MCF 10A (cell line): ENCODE measurements at regions of chr5 and their contacts with region 1.

Region 1: DNA sequence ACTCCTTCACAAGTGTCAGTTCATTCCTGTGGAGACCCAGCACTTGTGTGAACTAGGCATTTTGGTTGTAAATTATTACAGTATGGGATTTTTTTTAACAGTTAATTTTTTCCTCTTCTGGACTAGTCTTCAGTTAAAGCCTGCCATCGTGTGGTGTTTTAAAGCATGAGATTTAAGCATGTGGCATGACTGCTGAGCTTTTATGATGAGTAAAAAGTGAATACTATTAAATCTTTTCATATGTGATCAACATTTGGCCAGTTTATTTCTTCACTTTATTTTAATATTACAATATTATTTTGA is 25.0 kb downstream of the LMNB1 start:
- DNase-seq: peak; percentile 67
- H3K4me3 Mint-ChIP-seq: peak overlapping the region; percentile 15
- H3K27ac Mint-ChIP-seq: peak overlapping the region; percentile 37
- H3K4me1 Mint-ChIP-seq: peaks cover 35% of the 10 kb centered on the region
- H3K27me3 Mint-ChIP-seq: no peaks in the 10 kb centered on the region
- CTCF ChIP-seq: peak; percentile 70

Region 2: DNA sequence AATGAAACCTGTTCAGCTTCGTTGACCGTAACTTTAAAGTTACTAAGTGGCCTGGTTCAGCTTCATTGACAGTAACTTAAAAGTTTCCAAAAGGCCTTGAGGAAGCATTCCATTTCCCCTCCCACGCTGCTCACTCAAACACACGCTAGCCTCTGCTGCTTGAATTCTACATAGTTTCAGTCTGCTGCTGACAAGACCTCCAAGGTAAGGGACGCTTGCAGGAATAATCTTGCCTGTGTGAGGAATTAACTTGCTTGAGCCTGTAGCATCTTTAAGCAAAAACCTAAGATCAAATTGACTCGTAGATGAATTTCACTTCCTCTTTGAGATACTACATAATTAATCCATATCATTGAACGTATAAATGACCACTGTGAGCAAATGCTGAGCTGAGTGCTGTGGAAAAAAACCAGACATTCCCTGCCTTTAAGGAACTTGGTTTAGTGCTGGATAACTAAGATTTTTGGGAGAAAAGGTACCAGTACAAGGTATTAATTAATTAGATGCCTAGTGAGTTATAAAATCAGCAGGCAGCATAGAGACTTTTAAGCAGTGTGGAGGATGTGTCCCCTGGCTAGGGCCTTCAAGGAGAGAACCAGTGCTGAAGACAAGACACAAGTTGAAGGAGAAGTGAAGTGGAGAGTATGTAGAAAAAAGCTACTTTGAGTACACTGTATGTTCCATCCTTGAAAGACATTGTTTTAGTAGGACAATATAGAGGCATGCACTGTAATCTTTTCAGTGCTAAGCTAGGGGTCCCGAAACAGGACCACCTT is 339.5 kb before region 1 on chr5:
- CTCF ChIA-PET with region 1: no interaction called
- POLR2A ChIA-PET with region 1: no interaction called
- intact Hi-C with region 1: no loop called
- DNase-seq: no peak
- H3K4me3 Mint-ChIP-seq: no peak overlapping the region
- H3K27ac Mint-ChIP-seq: peak overlapping the region; percentile 28
- H3K4me1 Mint-ChIP-seq: no peaks in the 10 kb centered on the region
- H3K27me3 Mint-ChIP-seq: no peaks in the 10 kb centered on the region
- CTCF ChIP-seq: no peak

Region 3: DNA sequence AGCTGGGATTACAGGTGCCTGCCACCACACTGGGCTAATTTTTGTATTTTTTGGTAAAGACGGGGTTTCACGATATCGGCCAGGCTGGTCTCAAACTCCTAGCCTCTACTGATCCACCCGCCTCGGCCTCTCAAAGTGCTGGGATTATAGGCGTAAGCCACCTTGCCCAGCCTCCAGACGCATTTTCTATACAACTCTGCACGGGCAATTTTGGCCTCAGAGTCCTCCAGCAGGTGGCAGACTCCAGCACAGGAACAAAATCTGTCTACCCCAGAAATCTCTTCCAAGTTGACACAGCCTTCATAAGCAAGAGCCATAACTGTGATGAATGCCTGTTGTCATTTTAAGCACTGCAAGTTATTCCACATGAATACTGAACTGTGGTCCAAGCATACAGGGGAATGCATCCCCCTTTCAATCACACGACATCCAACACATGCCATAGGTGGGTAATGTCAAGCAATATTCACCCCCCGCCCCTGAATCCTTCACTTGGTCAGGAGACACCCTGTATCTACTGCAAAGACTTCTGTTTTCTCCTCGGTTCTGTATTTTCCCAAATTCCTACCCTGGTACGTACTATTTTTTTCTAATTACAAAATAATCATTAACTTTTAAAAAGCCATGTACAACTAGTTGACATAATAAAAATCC is 257.7 kb before region 1 on chr5:
- CTCF ChIA-PET with region 1: no interaction called
- POLR2A ChIA-PET with region 1: no interaction called
- intact Hi-C with region 1: loop called (anchors 1 kb)
- DNase-seq: peak; percentile 60
- H3K4me3 Mint-ChIP-seq: no peak overlapping the region
- H3K27ac Mint-ChIP-seq: peak overlapping the region; percentile 33
- H3K4me1 Mint-ChIP-seq: no peaks in the 10 kb centered on the region
- H3K27me3 Mint-ChIP-seq: no peaks in the 10 kb centered on the region
- CTCF ChIP-seq: peak; percentile 63

Region 4: GRCh38 chr5:126651013-126651577 is 150.8 kb before region 1 on chr5:
- CTCF ChIA-PET with region 1: interaction called, 25 read pairs
- POLR2A ChIA-PET with region 1: interaction called, 5 read pairs
- intact Hi-C with region 1: loop called (anchors 1 kb)
- DNase-seq: no peak
- H3K4me3 Mint-ChIP-seq: no peak overlapping the region
- H3K27ac Mint-ChIP-seq: no peak overlapping the region
- H3K4me1 Mint-ChIP-seq: no peaks in the 10 kb centered on the region
- H3K27me3 Mint-ChIP-seq: no peaks in the 10 kb centered on the region
- CTCF ChIP-seq: no peak

Region 5: GRCh38 chr5:126686451-126687126 is 115.4 kb before region 1 on chr5:
- CTCF ChIA-PET with region 1: interaction called, 12 read pairs
- POLR2A ChIA-PET with region 1: interaction called, 3 read pairs
- intact Hi-C with region 1: no loop called
- DNase-seq: no peak
- H3K4me3 Mint-ChIP-seq: no peak overlapping the region
- H3K27ac Mint-ChIP-seq: no peak overlapping the region
- H3K4me1 Mint-ChIP-seq: no peaks in the 10 kb centered on the region
- H3K27me3 Mint-ChIP-seq: no peaks in the 10 kb centered on the region
- CTCF ChIP-seq: no peak